GM18951 (cell line): ENCODE measurements at regions of chr18 and their contacts with region 1.

Region 1: GRCh38 chr18:63131106-63131958 is 188.2 kb downstream of the BCL2 start:
- POLR2A ChIP-seq: no peak

Region 2: DNA sequence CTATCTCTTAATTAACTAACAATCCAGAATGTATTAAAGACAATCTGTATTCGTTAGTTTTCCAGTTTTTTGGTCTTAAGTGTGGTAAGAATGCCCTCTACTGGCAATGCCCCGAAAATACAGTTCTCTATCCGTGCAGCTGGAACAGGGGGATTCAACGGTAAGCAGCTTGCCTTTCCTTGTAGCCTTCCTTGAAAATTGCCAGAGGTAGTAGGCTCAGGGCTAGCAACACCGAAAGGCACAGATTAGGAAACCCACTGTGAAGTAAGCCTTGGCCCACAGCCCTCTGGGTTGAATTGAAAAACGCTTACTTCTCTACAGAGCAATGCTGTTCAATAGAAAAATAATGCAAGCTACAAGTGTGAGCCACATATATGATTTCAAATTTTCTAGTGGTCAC is 308.0 kb after region 1 on chr18:
- in situ Hi-C with region 1: loop called (anchors 25 kb)
- POLR2A ChIP-seq: no peak